ENCODE measurements at regions of chr7 and their contacts with region 1.

Region 1: GRCh38 chr7:14691597-14692203 is 210.9 kb downstream of the DGKB start:
- DNase-seq: peak in 27 of 35 experiments; percentile 1 to 58 (median 24)
- ATAC-seq: peak in 1 of 4 experiments; percentile 43
- H3K4me3 ChIP-seq: no peak overlapping the region
- H3K4me3 Mint-ChIP-seq: no peak overlapping the region
- H3K27ac ChIP-seq: no peak overlapping the region
- H3K27ac Mint-ChIP-seq: no peak overlapping the region
- H3K4me1 ChIP-seq: no peaks in the 10 kb centered on the region
- H3K4me1 Mint-ChIP-seq: no peaks in the 10 kb centered on the region
- H3K27me3 ChIP-seq: no peaks in the 10 kb centered on the region
- H3K27me3 Mint-ChIP-seq: peaks cover 0 to 1% of the 10 kb centered on the region in 2 donors

Region 2: DNA sequence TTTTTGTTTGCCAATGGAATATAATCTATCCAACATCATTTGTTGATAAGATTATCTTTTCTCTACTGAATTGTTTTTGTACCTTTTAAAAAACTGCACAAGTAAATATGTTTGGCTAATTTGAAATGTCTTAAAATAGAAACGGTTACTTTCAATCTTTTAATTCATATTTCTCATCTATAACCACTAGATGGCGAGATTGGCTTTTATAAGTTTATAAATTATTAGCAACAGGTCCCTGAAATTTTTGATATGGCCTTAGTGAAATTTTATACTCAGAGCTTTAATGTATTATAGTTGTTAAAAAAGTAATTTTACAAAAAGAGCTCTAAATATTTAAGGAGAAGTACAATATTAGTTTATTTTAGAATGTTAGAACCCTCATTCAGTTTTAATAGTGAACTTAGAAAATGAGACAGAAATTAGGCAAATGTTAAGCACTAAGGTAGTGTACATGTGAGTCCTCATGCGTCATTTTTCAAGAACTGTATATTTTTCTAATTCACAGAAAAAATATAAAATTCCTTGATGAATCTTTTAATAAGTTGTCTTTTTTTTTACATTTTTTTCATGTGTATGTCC is 1411.8 kb before region 1 on chr7:
- CTCF ChIA-PET with region 1: interaction called, 5 to 59 read pairs
- POLR2A ChIA-PET with region 1: no interaction called
- DNase-seq: peak in 1 of 35 experiments; percentile 38
- ATAC-seq: no peak
- H3K4me3 ChIP-seq: no peak overlapping the region
- H3K4me3 Mint-ChIP-seq: no peak overlapping the region
- H3K27ac ChIP-seq: no peak overlapping the region
- H3K27ac Mint-ChIP-seq: no peak overlapping the region
- H3K4me1 ChIP-seq: no peaks in the 10 kb centered on the region
- H3K4me1 Mint-ChIP-seq: no peaks in the 10 kb centered on the region
- H3K27me3 ChIP-seq: no peaks in the 10 kb centered on the region
- H3K27me3 Mint-ChIP-seq: peaks cover 0 to 13% of the 10 kb centered on the region in 2 donors

Region 3: GRCh38 chr7:14714161-14714728 is 22.5 kb after region 1 on chr7:
- CTCF ChIA-PET with region 1: no interaction called
- POLR2A ChIA-PET with region 1: no interaction called
- DNase-seq: no peak
- ATAC-seq: no peak
- H3K4me3 ChIP-seq: no peak overlapping the region
- H3K4me3 Mint-ChIP-seq: no peak overlapping the region
- H3K27ac ChIP-seq: no peak overlapping the region
- H3K27ac Mint-ChIP-seq: no peak overlapping the region
- H3K4me1 ChIP-seq: no peaks in the 10 kb centered on the region
- H3K4me1 Mint-ChIP-seq: no peaks in the 10 kb centered on the region
- H3K27me3 ChIP-seq: no peaks in the 10 kb centered on the region
- H3K27me3 Mint-ChIP-seq: no peaks in the 10 kb centered on the region

Region 4: GRCh38 chr7:15954671-15955354 is 1263.1 kb after region 1 on chr7:
- CTCF ChIA-PET with region 1: no interaction called
- POLR2A ChIA-PET with region 1: no interaction called
- DNase-seq: no peak
- ATAC-seq: no peak
- H3K4me3 ChIP-seq: no peak overlapping the region
- H3K4me3 Mint-ChIP-seq: no peak overlapping the region
- H3K27ac ChIP-seq: no peak overlapping the region
- H3K27ac Mint-ChIP-seq: no peak overlapping the region
- H3K4me1 ChIP-seq: no peaks in the 10 kb centered on the region
- H3K4me1 Mint-ChIP-seq: no peaks in the 10 kb centered on the region
- H3K27me3 ChIP-seq: no peaks in the 10 kb centered on the region
- H3K27me3 Mint-ChIP-seq: no peaks in the 10 kb centered on the region